Mammary epithelial cell (primary cell): ENCODE measurements at regions of chr1 and their contacts with region 1.

Region 1: DNA sequence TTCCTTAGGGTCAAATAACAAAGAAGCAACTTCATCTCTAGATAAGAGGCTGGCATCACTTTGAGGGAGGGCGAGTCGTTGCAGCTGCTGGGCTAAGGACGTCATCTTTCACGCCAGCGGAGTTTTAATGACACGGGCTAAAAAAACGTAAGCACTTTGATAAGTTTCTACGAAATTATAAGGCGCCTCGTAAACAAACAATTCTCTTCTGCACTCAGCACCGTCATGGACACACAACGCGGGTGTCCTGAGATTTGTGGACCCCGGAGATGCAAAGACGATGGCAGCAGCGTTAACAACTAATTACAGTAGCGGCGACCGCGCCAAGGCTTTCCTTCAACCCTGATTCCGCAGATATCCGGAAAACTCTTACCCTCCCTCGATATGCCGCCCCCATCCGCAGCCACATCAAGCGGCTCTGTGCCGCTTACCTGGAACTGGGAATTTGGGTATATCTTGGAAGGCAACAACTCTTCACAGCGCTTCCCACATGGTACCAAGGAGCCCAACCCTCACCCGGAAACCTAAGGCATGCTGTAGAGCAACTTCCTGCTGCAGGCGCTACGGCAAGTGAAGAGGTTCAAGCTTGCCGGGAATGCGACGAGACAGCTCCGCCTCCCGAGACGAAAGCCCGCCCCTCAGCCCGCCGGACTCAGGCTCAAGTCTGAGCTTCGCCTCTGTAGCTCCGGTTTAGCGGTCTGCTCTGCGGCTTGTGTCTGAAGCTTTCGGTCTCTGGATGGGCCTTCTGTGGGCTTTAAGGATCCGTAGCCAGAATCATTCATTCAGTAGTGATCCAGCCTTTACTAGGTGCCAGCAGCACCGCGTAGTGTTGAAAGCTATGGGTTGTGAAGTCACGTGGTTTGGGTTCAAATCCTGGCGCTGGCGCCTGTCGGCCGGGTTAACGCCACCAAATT is at the start of gene HEATR1:
- DNase-seq: peak; percentile 92
- H3K4me3 ChIP-seq: peak within 1 kb of the TSS; percentile 63 to 92 (median 70)
- H3K27ac ChIP-seq: peak within 1 kb of the TSS; percentile 67
- H3K4me1 ChIP-seq: peaks cover 6% of the 10 kb centered on the region
- H3K27me3 ChIP-seq: no peaks in the 10 kb centered on the region
- CTCF ChIP-seq: no peak
- total RNA-seq, gene HEATR1: 48.1 to 53.2 TPM

Region 2: GRCh38 chr1:236365999-236366570 is 238.2 kb before region 1 on chr1:
- CTCF ChIA-PET with region 1: no interaction called
- dilution Hi-C with region 1: no loop called
- in situ Hi-C with region 1: no loop called
- intact Hi-C with region 1: no loop called
- DNase-seq: no peak
- H3K4me3 ChIP-seq: no peak overlapping the region
- H3K27ac ChIP-seq: no peak overlapping the region
- H3K4me1 ChIP-seq: no peaks in the 10 kb centered on the region
- H3K27me3 ChIP-seq: no peaks in the 10 kb centered on the region
- CTCF ChIP-seq: no peak

Region 3: DNA sequence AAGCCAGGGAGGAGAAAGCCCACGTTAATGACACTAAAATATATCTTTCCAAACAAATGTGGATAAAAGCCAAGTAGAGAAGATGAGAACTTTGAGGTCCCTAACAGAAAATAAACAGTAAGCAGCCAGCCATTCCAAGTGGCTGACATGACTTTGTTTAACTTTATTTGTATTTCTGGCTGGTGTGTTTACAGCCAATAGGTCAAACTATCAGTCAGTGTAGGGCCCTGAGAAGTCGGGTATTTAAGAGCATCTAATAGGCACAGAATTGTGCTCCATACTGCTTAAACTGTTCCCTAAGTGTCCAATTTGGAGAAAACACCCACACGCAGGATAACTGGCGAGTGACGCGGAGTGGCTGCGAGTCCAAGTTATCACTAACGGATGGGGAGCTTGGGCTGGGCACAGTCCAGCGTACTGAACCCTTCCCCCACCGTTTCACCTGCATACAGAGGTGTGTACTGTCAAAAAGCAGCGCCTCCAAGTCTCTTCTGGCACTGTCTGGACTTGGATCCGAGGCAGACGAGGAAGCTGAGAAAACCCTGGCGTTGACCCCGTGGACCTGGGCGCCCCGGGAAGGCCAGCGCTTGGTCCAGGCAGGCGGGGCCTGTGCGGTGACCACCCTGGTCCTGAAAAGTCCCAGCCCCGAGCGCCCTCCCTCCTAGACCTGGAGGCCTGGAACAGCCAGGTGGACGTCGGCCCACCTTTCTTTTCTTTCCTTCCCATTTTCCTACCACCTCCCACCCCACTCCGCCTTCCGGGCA is 81.1 kb before region 1 on chr1:
- CTCF ChIA-PET with region 1: no interaction called
- dilution Hi-C with region 1: no loop called
- in situ Hi-C with region 1: no loop called
- intact Hi-C with region 1: no loop called
- DNase-seq: peak; percentile 35
- H3K4me3 ChIP-seq: peak overlapping the region; percentile 71 to 86 (median 74)
- H3K27ac ChIP-seq: no peak overlapping the region
- H3K4me1 ChIP-seq: peaks cover 4% of the 10 kb centered on the region
- H3K27me3 ChIP-seq: no peaks in the 10 kb centered on the region
- CTCF ChIP-seq: no peak

Region 4: DNA sequence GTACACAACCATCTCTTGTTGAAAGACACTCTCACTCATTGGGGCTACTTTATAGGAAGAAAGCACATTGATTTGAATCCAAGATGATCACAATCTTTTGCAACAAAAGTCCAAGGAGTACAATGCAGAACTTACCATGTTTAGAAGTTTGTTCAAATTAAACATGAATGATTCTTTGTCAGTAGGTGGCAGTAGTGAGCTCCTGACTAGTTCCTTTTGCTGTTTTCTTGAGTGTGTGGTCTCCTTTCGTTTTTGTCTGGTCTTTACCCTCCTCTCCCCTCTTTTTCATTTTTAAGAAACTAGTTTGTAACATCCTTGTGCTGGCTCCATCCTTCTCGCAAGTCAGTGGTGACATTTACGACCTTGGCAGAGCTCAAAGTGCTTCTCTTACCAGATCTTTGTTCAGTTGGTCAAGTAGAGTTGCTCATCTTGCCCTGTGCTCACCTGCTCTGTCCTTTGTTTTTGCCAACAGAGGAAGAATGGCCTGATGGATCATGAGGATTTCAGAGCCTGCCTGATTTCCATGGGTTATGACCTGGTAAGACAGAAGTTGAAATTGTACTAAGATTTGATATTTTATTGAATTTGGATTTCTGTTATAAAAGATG is 155.1 kb after region 1 on chr1:
- CTCF ChIA-PET with region 1: interaction called, 12 read pairs
- dilution Hi-C with region 1: no loop called
- in situ Hi-C with region 1: no loop called
- intact Hi-C with region 1: no loop called
- DNase-seq: peak; percentile 16
- H3K4me3 ChIP-seq: no peak overlapping the region
- H3K27ac ChIP-seq: no peak overlapping the region
- H3K4me1 ChIP-seq: no peaks in the 10 kb centered on the region
- H3K27me3 ChIP-seq: no peaks in the 10 kb centered on the region
- CTCF ChIP-seq: peak; percentile 64 to 80

Region 5: GRCh38 chr1:236774926-236775325 is 170.7 kb after region 1 on chr1:
- CTCF ChIA-PET with region 1: no interaction called
- dilution Hi-C with region 1: no loop called
- in situ Hi-C with region 1: no loop called
- intact Hi-C with region 1: loop called (anchors 1 kb)
- DNase-seq: no peak
- H3K4me3 ChIP-seq: no peak overlapping the region
- H3K27ac ChIP-seq: no peak overlapping the region
- H3K4me1 ChIP-seq: no peaks in the 10 kb centered on the region
- H3K27me3 ChIP-seq: no peaks in the 10 kb centered on the region
- CTCF ChIP-seq: peak; percentile 16 to 50

Region 6: DNA sequence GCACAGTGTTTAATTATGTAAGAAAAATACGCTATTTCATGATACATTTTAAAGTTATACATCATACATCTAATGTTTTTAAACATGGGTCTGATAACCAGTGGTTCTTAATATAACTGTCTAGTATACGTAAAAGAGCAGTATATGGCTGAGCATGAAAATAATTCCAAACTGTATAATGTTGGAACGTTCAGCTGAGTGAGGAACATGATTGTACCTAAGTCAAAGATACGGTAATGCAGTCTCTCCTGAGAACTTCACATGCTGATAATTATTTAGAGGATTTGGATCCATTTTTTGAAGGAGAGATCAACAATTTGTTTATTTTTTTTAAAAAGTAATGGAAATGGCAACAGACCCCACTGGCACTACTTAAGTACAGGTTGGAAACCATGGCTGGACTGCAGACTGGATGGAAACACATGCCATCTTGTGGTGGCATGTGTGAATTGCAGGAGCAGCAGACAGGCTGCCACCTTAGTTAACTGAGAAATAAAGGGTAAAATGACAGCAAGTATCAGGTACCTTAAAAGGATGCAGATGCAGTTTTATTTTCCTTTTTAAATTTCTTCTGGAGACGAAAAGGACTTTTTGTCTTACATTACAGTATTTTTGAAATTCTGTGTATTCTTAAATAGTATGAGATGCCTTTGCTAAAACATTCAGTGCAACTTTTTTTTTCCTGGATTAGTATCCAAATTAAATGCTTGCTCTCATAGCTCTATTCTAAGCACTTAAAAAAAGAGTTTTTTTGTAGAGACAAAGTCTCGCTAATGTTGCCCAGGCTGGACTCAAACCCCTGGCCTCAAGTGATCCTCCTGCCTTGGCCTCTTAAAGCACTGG is 264.6 kb after region 1 on chr1:
- CTCF ChIA-PET with region 1: no interaction called
- dilution Hi-C with region 1: no loop called
- in situ Hi-C with region 1: loop called (anchors 25 kb)
- intact Hi-C with region 1: loop called (anchors 1 kb)
- DNase-seq: peak; percentile 41
- H3K4me3 ChIP-seq: no peak overlapping the region
- H3K27ac ChIP-seq: no peak overlapping the region
- H3K4me1 ChIP-seq: no peaks in the 10 kb centered on the region
- H3K27me3 ChIP-seq: no peaks in the 10 kb centered on the region
- CTCF ChIP-seq: peak; percentile 96 to 98

Region 7: GRCh38 chr1:236913371-236914037 is 309.3 kb after region 1 on chr1:
- CTCF ChIA-PET with region 1: no interaction called
- dilution Hi-C with region 1: no loop called
- in situ Hi-C with region 1: no loop called
- intact Hi-C with region 1: no loop called
- DNase-seq: peak; percentile 44
- H3K4me3 ChIP-seq: no peak overlapping the region
- H3K27ac ChIP-seq: no peak overlapping the region
- H3K4me1 ChIP-seq: peaks cover 7% of the 10 kb centered on the region
- H3K27me3 ChIP-seq: no peaks in the 10 kb centered on the region
- CTCF ChIP-seq: no peak

Region 8: GRCh38 chr1:237124856-237125462 is 520.7 kb after region 1 on chr1:
- CTCF ChIA-PET with region 1: no interaction called
- dilution Hi-C with region 1: no loop called
- in situ Hi-C with region 1: no loop called
- intact Hi-C with region 1: no loop called
- DNase-seq: no peak
- H3K4me3 ChIP-seq: no peak overlapping the region
- H3K27ac ChIP-seq: no peak overlapping the region
- H3K4me1 ChIP-seq: no peaks in the 10 kb centered on the region
- H3K27me3 ChIP-seq: no peaks in the 10 kb centered on the region
- CTCF ChIP-seq: peak in 1 of 2 donors; percentile 26

Region 9: GRCh38 chr1:237386362-237387143 is 782.3 kb after region 1 on chr1:
- CTCF ChIA-PET with region 1: interaction called, 8 read pairs
- dilution Hi-C with region 1: no loop called
- in situ Hi-C with region 1: no loop called
- intact Hi-C with region 1: loop called (anchors 1 kb)
- DNase-seq: no peak
- H3K4me3 ChIP-seq: no peak overlapping the region
- H3K27ac ChIP-seq: no peak overlapping the region
- H3K4me1 ChIP-seq: no peaks in the 10 kb centered on the region
- H3K27me3 ChIP-seq: no peaks in the 10 kb centered on the region
- CTCF ChIP-seq: peak; percentile 65 to 73

Region 10: DNA sequence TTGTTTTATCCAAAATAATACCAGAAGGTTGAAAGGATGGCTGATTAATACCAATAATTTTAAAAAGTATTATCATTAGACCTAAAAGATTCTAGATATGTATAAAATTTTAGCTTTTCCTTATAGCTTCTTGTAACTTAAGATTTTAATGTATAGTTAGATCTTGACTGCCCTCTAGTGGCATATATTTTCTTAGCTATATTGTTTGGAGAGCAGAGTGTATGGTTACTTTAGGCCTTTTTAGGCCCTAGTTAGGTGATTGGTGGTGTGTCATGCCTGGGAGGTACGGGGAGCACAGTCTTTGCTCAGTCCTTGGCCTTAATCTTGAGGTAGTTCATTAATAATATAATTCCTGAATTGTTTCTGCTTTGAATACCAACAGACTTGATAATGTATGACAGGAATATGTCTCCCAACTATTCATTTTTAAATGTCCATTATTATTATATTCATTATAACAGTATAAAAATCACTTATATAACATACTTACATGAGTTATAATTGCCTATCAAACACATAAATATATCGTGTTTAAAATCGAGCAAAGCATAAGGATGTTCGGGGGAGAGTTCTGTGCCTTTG is 958.1 kb after region 1 on chr1:
- CTCF ChIA-PET with region 1: interaction called, 10 read pairs
- dilution Hi-C with region 1: no loop called
- in situ Hi-C with region 1: loop called in 1 of 2 experiments (anchors 25 kb)
- intact Hi-C with region 1: loop called (anchors 1 kb)
- DNase-seq: peak; percentile 66
- H3K4me3 ChIP-seq: no peak overlapping the region
- H3K27ac ChIP-seq: no peak overlapping the region
- H3K4me1 ChIP-seq: no peaks in the 10 kb centered on the region
- H3K27me3 ChIP-seq: no peaks in the 10 kb centered on the region
- CTCF ChIP-seq: peak; percentile 58 to 78